Left cardiac atrium (tissue), 4 donors: ENCODE measurements at regions of chr5 and their contacts with region 1.

Region 1: DNA sequence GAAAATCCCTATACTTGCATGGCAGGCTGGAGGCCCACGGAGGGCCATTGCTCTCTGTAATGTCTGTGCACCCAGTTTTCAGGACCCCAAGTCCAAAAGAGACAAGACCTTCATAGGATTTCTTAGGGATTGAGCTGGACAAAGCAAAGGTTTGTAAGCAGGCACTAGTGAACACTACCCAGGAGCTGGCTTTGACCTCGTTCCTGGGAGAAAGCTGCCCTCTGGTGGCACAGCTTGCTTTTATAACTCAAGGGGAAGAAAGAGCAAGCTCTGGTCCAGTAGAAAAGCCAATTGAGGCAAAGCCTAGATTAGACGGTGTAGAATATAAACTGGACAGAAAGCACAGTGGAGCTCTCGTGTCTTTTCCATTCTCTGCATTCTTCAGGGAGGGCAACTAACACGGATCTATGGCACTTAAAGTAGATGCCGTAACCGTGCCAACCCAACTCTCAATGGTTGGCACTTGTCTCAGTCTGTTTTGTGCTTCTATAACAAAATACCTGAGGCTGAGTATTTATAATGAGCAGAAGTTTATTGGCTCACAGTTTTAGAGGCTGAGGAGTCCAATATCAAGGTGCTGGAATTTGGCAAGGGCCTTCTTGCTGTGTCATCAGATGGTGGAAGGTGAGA is 7.9 kb downstream of the GABRP start:
- DNase-seq: peak; percentile 58
- ATAC-seq: peak; percentile 85 to 93

Region 2: DNA sequence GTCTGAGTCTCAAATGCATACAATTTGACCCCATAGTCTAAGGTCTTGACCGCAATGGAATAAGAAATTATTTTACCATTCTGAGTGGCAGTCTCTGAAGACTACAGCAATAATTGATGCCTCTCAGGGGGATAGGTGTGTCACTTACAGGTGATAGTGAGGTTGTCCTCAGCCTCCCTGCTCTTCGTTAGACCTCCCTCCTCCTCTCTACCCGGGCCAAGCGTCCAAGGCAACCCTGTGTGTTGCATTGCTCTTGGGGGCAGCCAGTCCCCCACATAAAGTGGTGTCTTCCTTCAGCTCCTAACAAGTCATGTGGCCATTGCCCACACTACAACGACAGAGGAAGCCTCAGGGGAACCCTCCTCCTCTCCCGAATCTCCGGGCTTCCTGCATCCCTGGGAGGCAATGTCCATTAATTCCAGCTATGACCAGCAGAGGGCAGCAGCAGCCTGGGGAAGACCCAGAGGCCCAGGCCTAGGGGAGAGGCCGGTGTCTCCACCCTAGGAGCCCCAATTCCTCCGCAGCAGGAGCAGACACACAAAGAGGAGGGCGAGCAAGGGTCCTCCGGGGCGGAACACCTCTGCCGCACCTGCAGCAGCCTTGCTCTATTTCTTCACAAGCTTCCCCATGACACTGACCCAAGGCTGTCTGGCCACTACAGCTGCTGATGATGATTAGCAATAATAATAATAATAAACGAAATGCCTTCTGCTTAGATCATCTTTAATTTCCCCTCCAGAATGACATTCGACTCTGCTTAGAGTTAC is 152.8 kb before region 1 on chr5:
- intact Hi-C with region 1: loop called (anchors 2 to 10 kb)
- DNase-seq: peak; percentile 68
- ATAC-seq: peak; percentile 59 to 65

Region 3: GRCh38 chr5:170745481-170746071 is 45.9 kb before region 1 on chr5:
- intact Hi-C with region 1: loop called (anchors 1 to 2 kb)
- DNase-seq: peak; percentile 40
- ATAC-seq: peak; percentile 57 to 66